Activated naive CD8-positive, alpha-beta T cell treated with anti-CD3 and anti-CD28 coated beads, Interleukin-2, amount 10 ng/mL, durations not matched to agents 7 days and 5 days (primary cell): ENCODE measurements at regions of chr13 and their contacts with region 1.

Region 1: DNA sequence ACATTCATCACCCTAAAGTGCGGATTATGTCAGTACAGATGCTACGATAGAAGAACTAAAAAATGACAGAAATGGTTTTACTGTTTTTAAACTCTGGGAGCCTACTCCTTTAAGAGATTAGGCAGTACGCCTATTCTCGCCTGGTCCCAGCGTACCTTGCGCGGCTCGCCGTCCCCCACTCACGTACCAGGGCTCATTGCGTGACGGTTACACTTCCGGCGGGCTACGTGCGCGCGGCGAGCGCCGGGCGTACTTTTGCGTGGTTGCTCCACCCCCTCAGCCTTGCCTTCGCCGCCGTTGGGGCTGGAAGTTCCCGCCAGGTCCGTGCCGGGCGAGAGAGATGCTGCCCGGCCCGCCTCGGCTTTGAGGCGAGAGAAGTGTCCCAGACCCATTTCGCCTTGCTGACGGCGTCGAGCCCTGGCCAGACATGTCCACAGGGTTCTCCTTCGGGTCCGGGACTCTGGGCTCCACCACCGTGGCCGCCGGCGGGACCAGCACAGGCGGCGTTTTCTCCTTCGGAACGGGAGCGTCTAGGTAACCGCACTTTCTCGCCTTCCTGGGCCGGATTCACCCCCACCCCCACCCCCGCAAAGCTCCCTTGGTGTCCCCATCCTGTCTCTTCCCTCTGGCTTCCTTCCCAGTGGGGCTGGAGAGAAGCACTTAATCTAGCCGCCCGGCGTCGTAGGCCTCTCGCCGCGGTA is at the start of gene NUP58:
- DNase-seq: peak; percentile 93
- ATAC-seq: peak; percentile 98
- H3K4me3 Mint-ChIP-seq: peak within 1 kb of the TSS; percentile 93
- H3K27ac Mint-ChIP-seq: peak within 1 kb of the TSS; percentile 92
- H3K4me1 Mint-ChIP-seq: peaks cover 27% of the 10 kb centered on the region
- H3K27me3 Mint-ChIP-seq: peaks cover 10% of the 10 kb centered on the region
- total RNA-seq, gene NUP58: 70.1 to 83.0 TPM

Region 2: DNA sequence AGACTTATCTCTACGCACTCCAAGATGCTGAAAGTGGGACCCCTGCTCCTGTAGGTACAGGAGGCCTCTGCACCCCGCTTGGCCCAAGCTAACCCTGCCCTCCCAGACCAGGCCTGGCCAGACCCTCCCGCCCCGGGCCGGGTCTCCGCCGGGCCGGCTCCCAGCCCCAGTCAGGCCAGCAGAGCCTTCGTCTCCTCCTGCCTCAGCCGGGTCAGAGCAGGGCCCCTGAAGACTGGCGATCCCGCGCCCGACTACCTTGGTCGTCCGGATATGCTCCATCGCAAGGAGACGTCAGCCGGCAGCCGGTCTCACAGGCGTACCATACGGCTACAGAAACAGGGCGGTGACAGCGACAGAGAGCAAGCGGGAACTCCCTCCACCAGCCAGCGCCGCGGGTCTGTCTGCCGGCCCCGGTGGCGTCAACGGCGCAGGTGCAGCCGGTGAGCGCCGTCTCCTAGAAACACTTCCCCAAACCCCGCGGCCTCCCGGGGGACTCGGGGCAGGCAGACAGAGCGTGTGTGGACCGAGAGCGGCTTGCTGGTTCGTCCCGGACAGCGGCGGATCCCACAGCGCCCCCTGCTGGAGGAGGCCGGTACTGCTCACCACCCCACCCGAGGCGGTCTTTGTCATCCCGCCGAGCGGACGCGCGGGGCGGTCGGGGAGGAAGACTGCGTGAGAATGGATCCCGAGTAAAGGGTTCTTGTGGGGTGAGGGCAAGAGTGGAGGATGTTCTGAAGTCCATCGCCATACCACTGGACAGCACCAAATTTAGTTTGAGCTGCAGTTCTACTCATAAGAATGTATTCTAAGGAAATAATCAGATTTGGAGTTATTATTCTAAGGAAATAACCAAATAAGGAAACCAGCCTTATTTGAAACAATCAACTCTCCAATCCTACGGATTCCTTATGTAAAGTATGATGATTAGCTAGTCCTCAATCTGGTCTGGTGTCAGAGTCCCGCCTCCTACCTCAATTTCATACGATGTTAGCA is 14.2 kb before region 1 on chr13 and contains the start of gene MTMR6:
- POLR2A ChIA-PET with region 1: interaction called, 27 read pairs
- DNase-seq: peak; percentile 97
- ATAC-seq: peak; percentile 91
- H3K4me3 Mint-ChIP-seq: peak within 1 kb of the TSS; percentile 93
- H3K27ac Mint-ChIP-seq: peak within 1 kb of the TSS; percentile 97
- H3K4me1 Mint-ChIP-seq: peaks cover 24% of the 10 kb centered on the region
- H3K27me3 Mint-ChIP-seq: peaks cover 17% of the 10 kb centered on the region
- total RNA-seq, gene MTMR6: 17.5 to 20.1 TPM